Gastrocnemius medialis (tissue), 4 donors: ENCODE measurements at regions of chr4 and their contacts with region 1.

Region 1: DNA sequence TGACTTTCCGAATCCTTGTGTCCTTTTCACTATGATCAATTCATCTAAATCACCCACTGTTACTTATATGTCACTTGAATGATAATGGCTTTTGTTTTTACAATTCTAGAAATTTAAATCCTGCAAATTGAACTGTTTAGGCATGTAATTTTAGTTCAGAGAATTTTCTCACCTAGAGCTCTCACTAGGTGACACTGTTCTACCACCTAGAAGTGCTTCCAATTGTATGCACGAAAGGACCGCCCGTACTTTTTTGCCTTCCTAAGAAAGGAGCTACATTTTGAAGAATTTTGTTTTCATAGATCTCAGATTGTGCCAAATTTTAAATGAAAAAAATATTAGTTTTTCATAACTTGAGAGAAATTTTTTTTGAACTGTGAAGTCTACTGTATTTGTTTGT is 481.6 kb upstream of the FSTL5 start:
- DNase-seq: no peak
- ATAC-seq: no peak
- H3K4me3 ChIP-seq: no peak overlapping the region
- H3K27ac ChIP-seq: no peak overlapping the region
- H3K4me1 ChIP-seq: no peaks in the 10 kb centered on the region
- H3K27me3 ChIP-seq: no peaks in the 10 kb centered on the region
- CTCF ChIP-seq: peak in 2 of 5 experiments; percentile 23 to 55
- POLR2A ChIP-seq: no peak

Region 2: DNA sequence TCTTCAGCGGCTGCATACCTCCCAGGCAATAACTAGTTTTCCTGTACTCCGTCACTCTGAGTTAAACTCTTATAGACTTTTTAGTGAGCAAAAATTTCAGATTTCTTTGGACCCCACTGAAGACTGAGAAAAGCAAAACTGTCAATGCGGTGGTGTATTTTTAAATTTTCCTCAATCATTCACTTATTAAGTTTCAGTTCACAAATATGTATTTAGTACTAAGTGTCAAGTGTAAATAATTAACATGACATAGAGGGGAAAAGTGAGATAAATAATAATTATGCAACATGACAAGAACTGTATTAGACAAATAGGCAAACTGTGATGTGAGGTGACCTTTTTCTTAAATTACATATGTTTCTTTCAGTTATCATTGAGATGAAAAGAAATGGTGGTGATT is 396.9 kb after region 1 on chr4:
- in situ Hi-C with region 1: loop called in 1 of 4 experiments (anchors 10 kb)
- intact Hi-C with region 1: loop called (anchors 10 kb)
- DNase-seq: no peak
- ATAC-seq: no peak
- H3K4me3 ChIP-seq: no peak overlapping the region
- H3K27ac ChIP-seq: no peak overlapping the region
- H3K4me1 ChIP-seq: no peaks in the 10 kb centered on the region
- H3K27me3 ChIP-seq: no peaks in the 10 kb centered on the region
- CTCF ChIP-seq: no peak
- POLR2A ChIP-seq: no peak